GM13977 (cell line): ENCODE measurements at regions of chr7 and their contacts with region 1.

Region 1: DNA sequence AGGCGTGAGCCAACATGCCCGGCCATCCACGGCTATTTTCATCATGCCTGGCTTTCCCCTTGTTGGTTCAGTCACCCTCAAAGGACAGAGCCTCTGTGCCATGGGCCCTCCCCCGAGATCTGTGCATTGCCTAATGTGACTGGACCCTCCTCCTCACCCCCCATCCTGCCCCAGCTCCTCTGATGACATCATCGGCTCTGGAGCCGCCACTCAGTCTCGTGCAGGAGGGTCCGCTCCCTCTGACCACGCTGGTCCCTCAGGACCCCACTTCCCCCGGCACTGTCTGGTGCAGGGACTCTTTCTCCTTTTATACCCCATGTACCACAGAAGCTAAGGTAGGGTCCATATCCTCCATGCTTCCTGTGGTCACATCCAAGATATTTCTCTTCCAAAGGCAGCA is 33.2 kb upstream of the BAIAP2L1 start:
- DNase-seq: no peak
- CTCF ChIP-seq: no peak

Region 2: GRCh38 chr7:98745722-98746318 is 311.7 kb after region 1 on chr7:
- in situ Hi-C with region 1: loop called (anchors 10 kb)
- DNase-seq: peak; percentile 77
- CTCF ChIP-seq: peak; percentile 75